ENCODE measurements at regions of chr3 and their contacts with region 1.

Region 1: DNA sequence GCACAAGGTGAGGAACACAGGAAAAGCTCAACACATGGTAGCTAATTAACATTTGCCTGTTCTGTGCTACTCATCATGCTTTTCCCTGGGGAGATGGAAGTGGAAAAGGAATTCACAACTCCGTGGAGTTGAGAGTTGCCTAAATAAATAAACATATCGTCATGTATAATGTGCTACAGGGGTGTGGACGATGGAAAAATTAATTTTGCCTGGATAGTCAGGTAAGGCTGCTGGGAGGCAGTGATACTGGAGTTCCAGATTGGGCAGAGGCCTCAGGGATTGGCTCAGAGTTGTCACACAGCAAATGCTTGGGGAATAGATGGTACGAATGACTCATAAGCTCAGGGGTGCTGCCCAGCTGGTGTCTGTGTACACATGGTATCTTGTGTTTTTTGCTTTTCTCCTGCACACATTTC is 3.1 kb upstream of the ABHD6 start:
- DNase-seq: no peak
- H3K4me3 ChIP-seq: no peak overlapping the region
- H3K27me3 ChIP-seq: peaks cover 9% of the 10 kb centered on the region
- CTCF ChIP-seq: no peak

Region 2: GRCh38 chr3:57796261-57796660 is 438.3 kb before region 1 on chr3:
- CTCF ChIA-PET with region 1: no interaction called
- POLR2A ChIA-PET with region 1: interaction called, 10 read pairs
- DNase-seq: no peak
- H3K4me3 ChIP-seq: no peak overlapping the region
- H3K27me3 ChIP-seq: no peaks in the 10 kb centered on the region
- CTCF ChIP-seq: no peak

Region 3: GRCh38 chr3:58059349-58060321 is 174.9 kb before region 1 on chr3:
- CTCF ChIA-PET with region 1: no interaction called
- POLR2A ChIA-PET with region 1: interaction called, 20 read pairs
- DNase-seq: peak; percentile 76
- H3K4me3 ChIP-seq: no peak overlapping the region
- H3K27me3 ChIP-seq: no peaks in the 10 kb centered on the region
- CTCF ChIP-seq: no peak

Region 4: GRCh38 chr3:58217209-58217811 is 17.2 kb before region 1 on chr3:
- CTCF ChIA-PET with region 1: interaction called, 40 read pairs
- POLR2A ChIA-PET with region 1: no interaction called
- DNase-seq: no peak
- H3K4me3 ChIP-seq: no peak overlapping the region
- H3K27me3 ChIP-seq: peaks cover 3% of the 10 kb centered on the region
- CTCF ChIP-seq: peak; percentile 86

Region 5: DNA sequence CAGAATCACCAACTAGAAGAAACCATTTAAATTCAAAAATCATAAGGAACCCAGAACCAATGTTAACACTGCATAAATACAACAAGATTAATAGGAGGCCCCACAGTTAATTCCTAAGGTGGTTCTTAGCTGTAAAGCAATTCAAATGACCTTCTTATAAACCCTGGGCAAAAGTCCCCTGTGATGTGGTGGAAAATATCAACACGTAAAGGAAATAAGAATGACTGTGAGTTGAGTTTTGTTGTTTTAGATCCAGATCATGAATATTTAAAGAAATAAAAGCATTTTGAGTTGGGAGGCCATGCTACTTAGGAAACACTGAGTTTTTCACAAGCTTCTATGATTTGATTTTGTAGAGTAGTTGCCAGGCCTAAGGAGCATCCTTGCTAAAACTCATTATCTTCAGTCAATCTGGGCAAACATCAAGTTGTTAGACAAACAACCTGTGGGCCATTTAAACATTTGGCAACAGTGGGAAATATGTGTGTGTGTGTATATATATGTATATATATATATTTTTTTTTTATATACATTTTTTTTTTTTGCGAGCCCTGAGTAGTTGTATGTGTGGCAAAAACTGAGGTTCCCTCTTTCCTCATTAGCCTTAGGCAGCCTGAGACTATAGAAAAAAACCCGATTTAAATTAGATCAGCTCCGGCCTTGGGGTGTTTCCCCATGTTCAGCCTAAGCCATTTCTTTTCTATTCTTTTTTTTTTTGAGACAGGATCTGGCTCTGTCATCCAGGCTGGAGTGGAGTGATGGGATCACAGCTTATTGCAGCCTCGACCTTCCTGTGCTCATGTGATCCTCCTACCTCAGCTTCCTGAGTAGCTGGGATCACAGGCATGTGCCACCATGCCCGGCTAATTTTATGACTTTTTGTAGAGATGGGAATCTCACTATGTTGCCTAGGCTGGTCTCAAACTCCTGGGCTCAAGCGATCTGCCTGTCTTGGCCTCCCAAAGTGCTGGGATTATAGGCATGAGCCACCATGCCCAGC is 90.2 kb after region 1 on chr3:
- CTCF ChIA-PET with region 1: no interaction called
- POLR2A ChIA-PET with region 1: no interaction called
- DNase-seq: no peak
- H3K4me3 ChIP-seq: no peak overlapping the region
- H3K27me3 ChIP-seq: no peaks in the 10 kb centered on the region
- CTCF ChIP-seq: no peak